ENCODE measurements at regions of chr17 and their contacts with region 1.

Region 1: DNA sequence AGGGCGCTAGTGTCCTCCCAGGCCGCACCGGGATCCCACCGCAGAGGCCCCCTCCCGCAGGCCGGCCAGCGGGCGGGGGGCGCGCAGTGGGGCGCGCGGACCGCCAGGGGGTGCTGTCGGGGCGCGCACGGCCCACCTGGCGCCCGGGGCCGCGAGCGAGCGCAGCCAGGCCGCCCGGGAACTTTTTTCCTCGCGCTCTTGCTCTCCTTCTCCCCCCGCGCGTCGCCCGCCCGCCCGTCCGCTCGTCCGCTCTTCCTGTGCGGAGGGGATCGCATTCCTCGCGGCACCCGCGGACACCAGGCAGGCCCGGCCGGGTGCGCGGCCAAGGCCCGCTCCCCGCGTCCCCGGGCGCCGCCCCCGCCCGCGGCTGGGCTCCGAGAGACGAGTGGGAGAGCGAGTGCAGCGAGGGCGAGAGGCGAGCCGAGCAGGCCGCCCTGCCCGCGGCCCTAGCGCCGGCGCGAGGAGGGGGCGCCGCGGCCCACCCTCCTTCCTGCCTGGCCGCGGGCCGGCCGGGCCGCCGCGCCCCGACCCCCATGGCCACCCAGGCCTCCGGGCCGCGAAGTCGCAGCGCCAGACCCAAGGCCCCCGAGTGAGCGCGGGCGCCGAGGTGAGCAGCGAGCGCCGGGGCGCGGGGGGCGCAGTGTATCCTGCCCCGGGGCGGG is at the start of gene RAI1:
- DNase-seq: peak; percentile 84 to 92 (median 92)
- ATAC-seq: peak; percentile 45 to 70
- H3K4me3 ChIP-seq: peak within 1 kb of the TSS; percentile 98
- H3K27ac ChIP-seq: peak within 1 kb of the TSS; percentile 88
- H3K4me1 ChIP-seq: peaks cover 14% of the 10 kb centered on the region
- H3K27me3 ChIP-seq: no peaks in the 10 kb centered on the region
- total RNA-seq, gene RAI1: 18.2 to 26.8 (median 23.4) TPM

Region 2: DNA sequence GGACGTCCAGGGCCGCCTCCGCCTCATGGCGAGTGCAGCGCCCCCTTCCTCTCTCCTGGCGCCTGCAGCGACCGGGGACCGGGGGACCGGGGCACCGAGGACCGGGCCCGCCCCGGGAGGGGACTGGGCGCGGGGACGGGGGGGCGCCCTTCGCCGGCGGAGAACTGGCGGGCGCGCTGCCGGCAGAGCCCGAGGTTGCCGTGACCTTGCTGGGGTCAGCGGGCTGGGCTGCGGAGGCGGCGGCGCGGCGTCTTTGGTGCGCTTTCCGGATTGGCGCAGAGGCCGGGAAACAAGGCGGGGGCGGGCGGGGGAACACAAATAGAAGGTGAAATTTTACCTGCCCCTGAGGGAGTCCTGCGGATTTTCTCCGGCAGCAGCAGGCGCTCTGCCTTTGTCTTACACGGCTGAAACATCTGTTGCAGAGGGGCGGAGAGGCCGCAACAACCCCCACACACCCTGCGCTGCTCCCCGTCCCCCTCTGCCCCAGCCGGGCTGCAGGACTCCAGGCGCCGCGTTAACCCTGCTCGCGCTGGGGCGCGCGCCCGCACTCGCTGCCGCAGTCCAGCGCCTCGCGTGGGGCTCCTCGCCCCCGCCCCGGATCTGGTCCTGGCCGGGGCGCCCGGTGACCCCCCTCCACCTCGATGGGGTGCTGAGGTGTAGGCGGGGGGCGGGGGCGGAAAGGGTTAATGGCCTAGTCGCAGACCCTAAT is 102.0 kb after region 1 on chr17:
- intact Hi-C with region 1: loop called in 2 of 4 experiments (anchors 10 kb)
- DNase-seq: peak; percentile 64 to 89 (median 86)
- ATAC-seq: peak; percentile 16 to 33
- H3K4me3 ChIP-seq: peak overlapping the region; percentile 53
- H3K27ac ChIP-seq: peak overlapping the region; percentile 83
- H3K4me1 ChIP-seq: peaks cover 26% of the 10 kb centered on the region
- H3K27me3 ChIP-seq: no peaks in the 10 kb centered on the region

Region 3: DNA sequence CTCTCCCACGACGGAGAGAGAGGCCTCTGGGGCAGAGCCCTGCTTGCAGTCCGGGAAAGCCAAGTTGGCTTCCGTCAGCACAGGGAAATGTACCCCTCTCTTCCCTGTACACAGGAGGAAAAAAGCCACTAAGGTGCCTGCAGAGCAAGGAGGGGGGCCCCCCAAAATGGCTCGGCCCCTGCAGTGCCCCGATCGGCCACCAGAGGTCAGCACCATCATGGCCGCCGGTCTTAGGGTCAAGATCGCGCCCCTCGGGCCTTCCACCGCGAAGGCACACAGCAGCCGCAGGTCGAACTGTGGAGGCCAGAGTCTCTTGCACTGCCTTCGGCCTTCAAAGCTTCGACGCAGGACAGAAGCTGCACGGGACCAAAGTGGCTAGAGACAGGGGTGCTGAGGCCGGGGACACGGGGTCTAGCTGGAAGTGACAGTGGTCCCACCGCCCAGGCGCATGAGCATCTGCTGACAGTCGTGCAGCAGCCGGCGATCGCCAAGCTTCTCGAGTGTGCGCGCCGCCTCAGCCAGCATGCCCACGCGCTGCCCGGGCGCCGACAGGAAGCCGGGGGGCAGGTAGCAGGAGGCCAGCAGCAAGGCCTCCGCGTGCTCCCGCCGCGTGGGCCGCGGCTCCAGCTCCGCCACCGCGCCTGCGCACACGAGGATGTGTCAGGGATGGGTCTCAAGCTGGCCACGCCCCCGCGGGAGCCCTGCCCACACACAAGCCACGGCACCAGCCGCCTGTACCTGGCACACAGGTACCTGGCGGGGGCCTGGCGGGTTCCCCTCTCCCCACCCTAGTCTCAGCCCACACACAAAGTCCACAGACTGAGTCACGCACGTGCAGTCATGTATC is 131.1 kb after region 1 on chr17:
- intact Hi-C with region 1: loop called in 1 of 4 experiments (anchors 10 kb)
- DNase-seq: peak; percentile 77 to 93 (median 92)
- ATAC-seq: peak; percentile 32 to 53
- H3K4me3 ChIP-seq: no peak overlapping the region
- H3K27ac ChIP-seq: no peak overlapping the region
- H3K4me1 ChIP-seq: no peaks in the 10 kb centered on the region
- H3K27me3 ChIP-seq: no peaks in the 10 kb centered on the region

Region 4: GRCh38 chr17:17839791-17840707 is 158.7 kb after region 1 on chr17:
- intact Hi-C with region 1: loop called in 1 of 4 experiments (anchors 10 kb)
- DNase-seq: peak; percentile 89 to 97 (median 95)
- ATAC-seq: peak; percentile 77 to 78
- H3K4me3 ChIP-seq: peak overlapping the region; percentile 8
- H3K27ac ChIP-seq: peak overlapping the region; percentile 87
- H3K4me1 ChIP-seq: peaks cover 15% of the 10 kb centered on the region
- H3K27me3 ChIP-seq: no peaks in the 10 kb centered on the region

Region 5: DNA sequence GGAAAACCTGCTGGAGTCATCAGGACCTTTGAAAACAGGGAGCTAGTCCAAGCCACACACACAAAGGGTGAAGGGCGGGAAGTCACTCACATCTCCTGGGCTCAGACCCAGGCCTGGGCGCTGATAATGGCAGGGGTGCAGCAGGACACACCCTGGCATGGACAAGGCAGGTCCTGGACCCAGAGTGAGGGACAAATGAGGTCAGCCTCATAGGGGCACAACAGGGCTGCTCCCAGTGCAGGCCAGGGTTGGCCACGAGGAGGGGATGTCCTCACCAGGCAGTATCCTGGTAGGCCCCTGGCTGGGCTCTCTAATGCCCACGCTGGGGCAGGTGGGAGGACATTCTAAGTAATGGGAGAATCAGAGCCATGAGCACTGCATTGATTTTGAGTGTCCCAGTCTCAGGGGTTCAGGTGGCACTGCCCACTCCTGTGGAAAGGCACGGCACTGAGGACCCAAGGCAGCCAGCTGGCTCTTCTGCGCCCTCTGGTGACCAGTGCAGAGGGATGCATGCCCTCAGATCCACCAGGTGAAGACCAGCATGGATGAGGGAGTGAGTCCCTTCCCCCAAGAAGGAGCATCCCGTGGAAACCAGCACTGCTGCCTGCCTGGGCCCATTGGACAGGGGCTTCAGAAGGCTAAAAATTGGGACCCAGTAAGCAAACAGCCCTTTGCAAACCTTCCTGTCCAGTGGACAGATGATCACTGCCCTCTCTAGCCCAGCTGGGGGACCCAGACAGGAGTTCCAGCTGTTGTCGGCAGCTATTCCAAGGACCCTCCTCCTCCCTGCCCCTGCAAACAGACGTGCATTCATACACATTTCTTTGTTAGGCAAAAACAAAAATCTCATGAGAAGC is 178.8 kb after region 1 on chr17:
- intact Hi-C with region 1: loop called in 1 of 4 experiments (anchors 5 kb)
- DNase-seq: peak; percentile 63 to 85 (median 82)
- ATAC-seq: peak; percentile 90 to 91
- H3K4me3 ChIP-seq: no peak overlapping the region
- H3K27ac ChIP-seq: peak overlapping the region; percentile 31
- H3K4me1 ChIP-seq: peaks cover 3% of the 10 kb centered on the region
- H3K27me3 ChIP-seq: no peaks in the 10 kb centered on the region

Region 6: GRCh38 chr17:17877529-17878358 is 196.4 kb after region 1 on chr17:
- intact Hi-C with region 1: loop called in 1 of 4 experiments (anchors 10 kb)
- DNase-seq: peak; percentile 88 to 95 (median 94)
- ATAC-seq: peak; percentile 91 to 95
- H3K4me3 ChIP-seq: no peak overlapping the region
- H3K27ac ChIP-seq: peak overlapping the region; percentile 90
- H3K4me1 ChIP-seq: peaks cover 27% of the 10 kb centered on the region
- H3K27me3 ChIP-seq: no peaks in the 10 kb centered on the region

Region 7: DNA sequence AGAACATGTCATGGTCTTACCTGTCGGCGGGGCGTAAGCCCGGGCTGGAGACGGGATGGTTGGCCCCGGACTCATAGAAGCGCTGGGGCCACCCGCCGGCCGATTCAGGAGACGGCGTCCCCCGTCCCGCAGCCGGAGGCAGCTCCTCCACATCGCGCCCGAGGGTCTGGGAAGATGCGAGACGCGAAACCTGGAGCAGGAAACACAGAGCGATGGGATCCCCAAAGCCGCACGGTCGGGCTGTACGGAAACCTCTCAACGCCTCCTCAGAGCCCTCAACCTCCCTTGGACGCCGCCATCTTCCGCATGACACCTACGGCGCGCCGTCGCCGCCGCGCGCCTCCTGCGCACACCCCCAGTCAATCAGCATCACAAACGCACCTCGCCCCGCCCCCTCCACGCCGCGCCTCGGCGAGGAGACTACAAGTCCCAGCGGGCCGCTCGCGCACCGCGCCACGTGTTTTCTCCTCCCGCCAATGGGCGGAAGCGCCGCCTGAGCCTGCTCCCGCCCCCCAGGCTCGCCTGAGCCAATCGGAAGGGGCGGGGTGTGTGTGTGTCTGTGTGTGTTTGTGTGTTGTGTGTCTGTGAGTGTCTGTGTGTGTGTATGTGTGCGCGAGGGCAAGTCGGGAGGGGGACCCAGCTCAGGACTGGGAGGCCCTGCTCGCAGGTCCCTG is 357.7 kb after region 1 on chr17 and contains the starts of genes ATPAF2 and GID4:
- intact Hi-C with region 1: loop called in 3 of 4 experiments (anchors 5 to 10 kb)
- DNase-seq: peak; percentile 100
- ATAC-seq: peak; percentile 98
- H3K4me3 ChIP-seq: peak within 1 kb of the TSS; percentile 83
- H3K27ac ChIP-seq: peak within 1 kb of the TSS; percentile 58
- H3K4me1 ChIP-seq: peaks cover 16% of the 10 kb centered on the region
- H3K27me3 ChIP-seq: no peaks in the 10 kb centered on the region
- total RNA-seq, gene ATPAF2: 22.0 to 31.6 (median 29.3) TPM
- total RNA-seq, gene GID4: 13.8 to 20.7 (median 15.5) TPM

Measured in right cardiac atrium (tissue), 5 donors.